GM18951 (cell line): ENCODE measurements at regions of chr5 and their contacts with region 1.

Region 1: GRCh38 chr5:172044631-172045314 is 38.3 kb upstream of the FBXW11 start:
- POLR2A ChIP-seq: no peak

Region 2: DNA sequence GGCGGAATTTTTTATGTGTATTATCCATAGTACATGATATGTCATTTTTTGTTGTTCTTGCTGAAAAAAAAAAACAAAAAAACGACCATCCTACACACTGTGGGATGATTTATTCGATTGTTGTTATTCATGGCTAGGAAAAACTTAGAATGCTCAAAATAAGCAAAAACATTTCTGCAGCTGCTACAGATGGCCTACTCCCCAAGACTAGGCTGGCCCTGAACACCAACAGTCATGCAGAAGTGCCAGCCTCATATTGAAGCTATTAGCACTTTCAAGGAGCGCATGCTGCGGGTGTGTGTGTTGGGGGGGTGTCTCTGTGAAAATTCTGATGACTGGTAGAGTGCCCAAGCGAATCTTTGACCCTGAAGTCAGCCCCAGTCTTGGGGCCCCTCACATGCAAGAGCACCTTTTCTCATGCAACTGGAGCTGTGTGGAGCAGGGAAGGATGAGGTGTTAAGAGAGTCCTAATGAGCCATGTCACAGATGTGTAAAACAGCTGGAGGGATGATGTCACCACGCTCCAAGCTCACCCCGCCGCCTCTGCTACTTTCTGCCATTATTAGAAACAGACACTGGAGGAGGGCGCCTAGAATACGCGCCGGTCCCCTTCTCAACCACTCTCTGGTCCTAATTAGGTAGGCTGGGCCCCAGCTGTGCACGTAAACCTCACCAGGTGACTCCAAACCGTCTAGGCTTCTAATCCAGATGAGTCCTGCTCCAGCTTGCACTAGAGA is 320.1 kb before region 1 on chr5:
- in situ Hi-C with region 1: no loop called
- POLR2A ChIP-seq: no peak

Region 3: GRCh38 chr5:171914726-171915338 is 129.9 kb before region 1 on chr5:
- in situ Hi-C with region 1: loop called (anchors 5 kb)
- POLR2A ChIP-seq: no peak